Activated CD4-positive, alpha-beta memory T cell treated with anti-CD3 and anti-CD28 coated beads for 36 hours (primary cell): ENCODE measurements at regions of chr2 and their contacts with region 1.

Region 1: DNA sequence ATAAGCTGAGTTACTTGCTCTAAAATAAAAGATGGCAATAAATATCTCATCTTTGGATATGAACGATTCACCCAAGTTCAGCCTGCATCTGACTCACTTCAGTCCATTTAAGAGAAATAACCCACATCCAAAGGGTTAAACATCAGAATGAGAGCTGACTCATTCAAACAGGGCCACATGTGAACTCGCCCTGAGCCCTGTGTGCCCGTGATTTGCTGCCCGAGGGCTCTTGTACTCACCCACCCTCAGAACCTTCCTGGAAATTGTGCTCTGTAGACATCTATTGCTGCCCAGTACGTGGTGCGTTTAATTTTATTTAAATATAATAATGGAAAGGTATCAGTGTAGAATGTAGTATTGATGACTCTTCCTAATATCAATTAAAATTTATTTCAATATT is 66.9 kb upstream of the RBM44 start:
- DNase-seq: peak; percentile 81
- H3K4me3 Mint-ChIP-seq: peak overlapping the region; percentile 11
- H3K27ac Mint-ChIP-seq: peak overlapping the region; percentile 81
- H3K4me1 Mint-ChIP-seq: peaks cover 77% of the 10 kb centered on the region
- H3K27me3 Mint-ChIP-seq: no peaks in the 10 kb centered on the region

Region 2: DNA sequence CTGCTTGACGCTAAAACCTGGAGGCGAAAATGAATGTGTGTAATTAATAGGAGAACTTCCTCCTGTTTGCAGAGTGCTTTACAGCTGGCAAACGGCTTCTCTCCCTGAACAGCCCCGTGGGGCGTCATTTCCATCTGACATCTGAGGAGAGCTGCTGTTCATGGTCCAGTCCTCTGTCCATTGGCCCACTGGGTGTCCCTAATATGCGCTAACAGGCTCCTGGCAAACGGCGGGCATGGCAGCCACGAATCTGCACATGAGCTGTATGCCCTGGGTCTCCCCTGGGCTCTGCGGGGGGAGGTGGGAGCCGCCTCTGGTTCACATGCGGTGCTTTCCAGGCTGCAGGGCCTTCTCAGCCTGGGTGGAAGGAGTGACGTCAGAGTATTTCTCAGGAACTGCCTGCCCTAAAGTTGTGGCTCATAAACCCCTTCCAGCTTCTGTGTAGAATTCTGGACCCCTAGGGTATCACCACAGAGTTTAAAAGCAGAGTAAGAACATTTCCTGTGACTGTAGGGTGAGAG is 31.1 kb before region 1 on chr2:
- CTCF ChIA-PET with region 1: interaction called, 15 read pairs
- POLR2A ChIA-PET with region 1: interaction called, 15 read pairs
- intact Hi-C with region 1: loop called (anchors 1 kb)
- DNase-seq: peak; percentile 90
- H3K4me3 Mint-ChIP-seq: peak overlapping the region; percentile 54
- H3K27ac Mint-ChIP-seq: peak overlapping the region; percentile 98
- H3K4me1 Mint-ChIP-seq: peaks cover 94% of the 10 kb centered on the region
- H3K27me3 Mint-ChIP-seq: no peaks in the 10 kb centered on the region

Region 3: GRCh38 chr2:237818066-237818473 is 86.4 kb after region 1 on chr2:
- CTCF ChIA-PET with region 1: no interaction called
- POLR2A ChIA-PET with region 1: no interaction called
- intact Hi-C with region 1: loop called (anchors 5 kb)
- DNase-seq: no peak
- H3K4me3 Mint-ChIP-seq: no peak overlapping the region
- H3K27ac Mint-ChIP-seq: no peak overlapping the region
- H3K4me1 Mint-ChIP-seq: peaks cover 33% of the 10 kb centered on the region
- H3K27me3 Mint-ChIP-seq: no peaks in the 10 kb centered on the region

Region 4: DNA sequence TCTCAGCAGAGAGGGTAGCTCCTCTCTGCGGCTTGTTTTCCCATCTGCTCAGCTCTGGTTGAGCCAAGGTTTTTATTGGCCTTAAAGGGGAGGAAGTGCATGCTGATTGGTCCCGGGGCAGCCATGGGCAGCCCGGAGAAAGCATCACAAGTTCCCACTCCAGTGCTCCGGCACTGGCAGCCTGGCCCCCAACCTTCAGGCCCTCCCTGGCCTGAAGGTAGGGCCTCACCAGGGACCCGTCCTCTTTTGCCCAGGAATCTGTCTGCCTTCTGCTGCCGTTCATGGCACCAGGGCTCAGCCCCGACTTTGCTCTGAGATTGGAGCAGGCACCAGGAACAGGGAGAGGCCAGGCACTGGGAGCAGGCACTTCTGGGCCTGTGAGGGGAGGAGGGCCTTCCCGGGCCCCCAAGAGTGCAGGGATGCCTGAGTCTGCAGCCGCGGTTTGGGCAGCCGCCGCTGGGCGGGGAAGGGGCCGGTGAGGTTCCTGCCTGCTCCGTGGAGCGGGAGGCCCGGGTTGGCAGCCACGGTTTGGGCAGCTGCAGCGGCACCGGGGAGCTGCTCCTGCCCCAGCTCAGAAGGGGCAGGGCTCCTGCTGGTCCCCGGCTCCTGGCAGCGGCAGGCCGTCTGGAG is 489.3 kb after region 1 on chr2:
- CTCF ChIA-PET with region 1: no interaction called
- POLR2A ChIA-PET with region 1: no interaction called
- intact Hi-C with region 1: no loop called
- DNase-seq: no peak
- H3K4me3 Mint-ChIP-seq: peak overlapping the region; percentile 58
- H3K27ac Mint-ChIP-seq: no peak overlapping the region
- H3K4me1 Mint-ChIP-seq: no peaks in the 10 kb centered on the region
- H3K27me3 Mint-ChIP-seq: peaks cover 1% of the 10 kb centered on the region